Endothelial cell of umbilical vein (primary cell): ENCODE measurements at regions of chr4 and their contacts with region 1.

Region 1: DNA sequence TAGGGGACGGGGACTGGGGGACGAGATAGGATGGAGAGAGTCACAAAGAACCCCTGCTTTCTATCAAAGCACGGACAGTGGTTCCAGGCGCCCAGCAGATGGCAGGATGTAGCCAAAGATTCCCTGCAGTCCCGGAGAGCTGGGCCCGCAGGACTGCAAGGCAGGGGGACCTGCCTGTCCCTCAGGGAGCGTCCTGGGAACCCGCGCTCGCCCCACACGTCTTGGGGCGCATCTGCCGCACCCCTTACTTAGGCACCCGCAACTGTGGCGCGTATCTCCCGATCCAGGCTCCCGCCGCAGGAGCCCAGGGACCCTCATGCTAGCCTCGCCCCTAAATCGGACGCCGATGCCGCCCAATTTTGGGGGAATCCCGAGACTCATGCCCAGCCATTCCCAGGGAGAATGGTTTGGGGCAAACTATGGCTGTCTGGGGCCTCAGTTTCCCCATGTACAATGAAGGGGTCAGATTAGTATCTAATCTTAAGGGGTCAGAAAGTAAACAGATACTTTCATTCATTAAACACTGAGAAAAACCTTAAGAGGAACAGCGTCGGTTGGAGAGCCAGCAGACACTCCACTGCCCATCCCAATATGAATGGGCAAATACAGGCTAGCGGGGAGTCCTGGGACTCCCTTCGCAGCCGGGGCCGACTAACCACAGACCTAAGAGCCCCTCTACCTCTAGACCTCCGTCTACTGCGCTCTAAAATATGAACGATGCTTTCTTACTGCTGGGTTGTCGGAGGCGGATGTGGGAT is 581 bp upstream of the STK32B start:
- DNase-seq: peak; percentile 69
- H3K4me3 ChIP-seq: peak overlapping the region; percentile 45 to 64 (median 46)
- H3K27ac ChIP-seq: peak overlapping the region; percentile 9
- H3K4me1 ChIP-seq: peaks cover 12% of the 10 kb centered on the region
- H3K27me3 ChIP-seq: no peaks in the 10 kb centered on the region
- CTCF ChIP-seq: peak; percentile 64 to 80
- POLR2A ChIP-seq: no peak

Region 2: GRCh38 chr4:5019274-5019673 is 31.4 kb before region 1 on chr4 and contains the start of gene CYTL1:
- CTCF ChIA-PET with region 1: interaction called, 20 read pairs
- POLR2A ChIA-PET with region 1: no interaction called
- dilution Hi-C with region 1: no loop called
- intact Hi-C with region 1: no loop called
- DNase-seq: peak; percentile 12
- H3K4me3 ChIP-seq: peak within 1 kb of the TSS in 1 of 3 experiments; percentile 25
- H3K27ac ChIP-seq: no peak within 1 kb of the TSS
- H3K4me1 ChIP-seq: no peaks in the 10 kb centered on the region
- H3K27me3 ChIP-seq: peaks cover 6 to 20% of the 10 kb centered on the region in 2 experiments
- CTCF ChIP-seq: no peak
- POLR2A ChIP-seq: no peak
- total RNA-seq, gene CYTL1: 4.0 and 29.8 TPM in 2 replicates

Region 3: DNA sequence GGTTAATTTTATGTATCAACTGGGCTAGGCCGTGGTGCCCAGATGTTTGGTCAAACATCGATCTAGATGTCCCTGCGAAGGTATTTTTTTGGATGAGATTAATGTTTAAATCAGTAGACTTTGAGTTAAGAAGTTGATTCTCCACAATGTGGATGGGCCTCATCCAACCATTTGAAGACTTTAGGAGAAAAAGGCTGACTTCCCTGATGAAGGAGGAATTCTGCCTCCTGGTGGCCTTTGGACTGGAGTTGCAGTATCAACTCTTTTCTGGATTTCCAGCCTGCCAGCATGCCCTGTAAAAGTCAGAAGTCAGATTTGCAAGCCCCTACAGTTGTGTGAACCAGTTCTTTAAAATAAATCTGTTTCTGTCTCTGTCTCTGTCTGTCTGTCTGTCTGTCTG is 92.0 kb after region 1 on chr4:
- CTCF ChIA-PET with region 1: interaction called, 38 read pairs
- POLR2A ChIA-PET with region 1: no interaction called
- dilution Hi-C with region 1: no loop called
- intact Hi-C with region 1: loop called (anchors 1 kb)
- DNase-seq: peak; percentile 53
- H3K4me3 ChIP-seq: no peak overlapping the region
- H3K27ac ChIP-seq: no peak overlapping the region
- H3K4me1 ChIP-seq: no peaks in the 10 kb centered on the region
- H3K27me3 ChIP-seq: peaks cover 2 to 3% of the 10 kb centered on the region in 2 experiments
- CTCF ChIP-seq: peak; percentile 48 to 62
- POLR2A ChIP-seq: no peak

Region 4: DNA sequence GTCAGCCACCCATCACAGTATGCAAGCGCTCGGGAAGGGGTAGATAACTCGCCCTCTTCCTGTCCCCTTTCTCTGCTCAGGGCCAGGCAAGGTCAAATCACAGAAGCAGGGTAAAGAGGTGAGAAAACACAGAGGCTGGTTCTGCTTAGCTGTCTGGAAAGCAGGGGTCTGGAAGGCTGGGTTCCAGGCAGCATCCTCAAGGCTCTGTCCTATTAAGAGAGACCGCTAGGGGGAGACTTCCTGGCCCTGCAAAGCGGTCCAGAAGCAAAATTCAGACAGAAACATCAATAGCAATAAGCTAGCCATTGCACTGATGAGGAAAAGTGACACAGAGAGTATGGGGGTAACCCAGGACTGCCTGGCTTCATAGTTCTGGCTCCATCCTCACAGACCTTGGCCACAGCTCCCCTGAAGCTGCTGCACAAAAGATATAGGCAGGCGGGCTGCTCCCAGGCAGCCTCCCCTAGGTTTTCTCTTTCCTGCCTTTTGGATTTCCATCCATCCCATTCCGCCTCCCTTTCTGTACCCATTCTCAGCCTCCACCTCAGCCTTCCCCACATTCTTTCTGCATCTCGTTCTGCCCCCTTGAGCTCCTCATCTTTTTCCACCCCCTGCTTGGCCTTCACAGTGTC is 349.2 kb after region 1 on chr4:
- CTCF ChIA-PET with region 1: interaction called, 19 read pairs
- POLR2A ChIA-PET with region 1: no interaction called
- dilution Hi-C with region 1: no loop called
- intact Hi-C with region 1: loop called (anchors 5 kb)
- DNase-seq: peak; percentile 25
- H3K4me3 ChIP-seq: no peak overlapping the region
- H3K27ac ChIP-seq: no peak overlapping the region
- H3K4me1 ChIP-seq: no peaks in the 10 kb centered on the region
- H3K27me3 ChIP-seq: no peaks in the 10 kb centered on the region
- CTCF ChIP-seq: peak; percentile 74 to 82
- POLR2A ChIP-seq: no peak

Region 5: DNA sequence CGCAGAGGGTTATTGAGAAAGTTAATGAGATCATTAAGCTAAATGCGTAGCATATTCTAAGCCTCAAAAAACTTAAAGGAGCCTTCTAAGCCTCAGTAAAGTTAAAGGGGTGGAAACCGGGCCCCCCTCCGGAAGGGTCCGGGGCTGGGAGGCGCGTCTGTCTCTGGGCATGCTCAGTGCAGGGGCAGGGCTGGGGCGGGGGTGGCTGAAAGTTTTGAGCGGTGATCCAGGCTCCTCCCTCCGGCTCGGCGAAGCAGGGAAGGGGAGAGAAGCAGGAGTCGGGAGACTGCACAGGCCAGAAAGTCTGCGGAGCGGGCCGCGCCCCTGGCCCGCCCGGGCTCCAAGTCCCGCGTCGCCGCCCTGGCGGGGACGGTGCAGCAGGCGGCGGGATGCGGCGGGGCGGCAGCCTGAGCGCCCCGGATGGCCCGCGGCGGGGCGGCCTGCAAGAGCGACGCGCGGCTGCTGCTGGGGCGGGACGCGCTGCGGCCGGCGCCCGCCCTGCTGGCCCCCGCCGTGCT is 660.3 kb after region 1 on chr4 and contains the start of gene EVC:
- CTCF ChIA-PET with region 1: no interaction called
- POLR2A ChIA-PET with region 1: no interaction called
- dilution Hi-C with region 1: no loop called
- intact Hi-C with region 1: loop called (anchors 2 kb)
- DNase-seq: peak; percentile 67
- H3K4me3 ChIP-seq: peak within 1 kb of the TSS; percentile 41 to 52 (median 44)
- H3K27ac ChIP-seq: peak within 1 kb of the TSS; percentile 68
- H3K4me1 ChIP-seq: peaks cover 25% of the 10 kb centered on the region
- H3K27me3 ChIP-seq: no peaks in the 10 kb centered on the region
- CTCF ChIP-seq: no peak
- POLR2A ChIP-seq: peak; percentile 80
- total RNA-seq, gene EVC: 21.3 and 31.6 TPM in 2 replicates

Region 6: GRCh38 chr4:5812506-5813229 is 762.0 kb after region 1 on chr4:
- CTCF ChIA-PET with region 1: interaction called, 15 read pairs
- POLR2A ChIA-PET with region 1: no interaction called
- dilution Hi-C with region 1: no loop called
- intact Hi-C with region 1: loop called (anchors 1 kb)
- DNase-seq: peak; percentile 36
- H3K4me3 ChIP-seq: no peak overlapping the region
- H3K27ac ChIP-seq: no peak overlapping the region
- H3K4me1 ChIP-seq: no peaks in the 10 kb centered on the region
- H3K27me3 ChIP-seq: no peaks in the 10 kb centered on the region
- CTCF ChIP-seq: peak; percentile 41 to 58
- POLR2A ChIP-seq: no peak